Activated naive CD4-positive, alpha-beta T cell treated with anti-CD3 and anti-CD28 coated beads for 36 hours (primary cell): ENCODE measurements at regions of chr1 and their contacts with region 1.

Region 1: GRCh38 chr1:244272471-244273261 is 179.0 kb downstream of the ADSS2 start:
- DNase-seq: peak; percentile 84
- H3K4me3 Mint-ChIP-seq: no peak overlapping the region
- H3K27ac Mint-ChIP-seq: no peak overlapping the region
- H3K4me1 Mint-ChIP-seq: no peaks in the 10 kb centered on the region
- H3K27me3 Mint-ChIP-seq: no peaks in the 10 kb centered on the region

Region 2: GRCh38 chr1:242467556-242468145 is 1805.0 kb before region 1 on chr1:
- CTCF ChIA-PET with region 1: no interaction called
- intact Hi-C with region 1: loop called (anchors 10 kb)
- DNase-seq: peak; percentile 42
- H3K4me3 Mint-ChIP-seq: no peak overlapping the region
- H3K27ac Mint-ChIP-seq: no peak overlapping the region
- H3K4me1 Mint-ChIP-seq: no peaks in the 10 kb centered on the region
- H3K27me3 Mint-ChIP-seq: peaks cover 7% of the 10 kb centered on the region

Region 3: DNA sequence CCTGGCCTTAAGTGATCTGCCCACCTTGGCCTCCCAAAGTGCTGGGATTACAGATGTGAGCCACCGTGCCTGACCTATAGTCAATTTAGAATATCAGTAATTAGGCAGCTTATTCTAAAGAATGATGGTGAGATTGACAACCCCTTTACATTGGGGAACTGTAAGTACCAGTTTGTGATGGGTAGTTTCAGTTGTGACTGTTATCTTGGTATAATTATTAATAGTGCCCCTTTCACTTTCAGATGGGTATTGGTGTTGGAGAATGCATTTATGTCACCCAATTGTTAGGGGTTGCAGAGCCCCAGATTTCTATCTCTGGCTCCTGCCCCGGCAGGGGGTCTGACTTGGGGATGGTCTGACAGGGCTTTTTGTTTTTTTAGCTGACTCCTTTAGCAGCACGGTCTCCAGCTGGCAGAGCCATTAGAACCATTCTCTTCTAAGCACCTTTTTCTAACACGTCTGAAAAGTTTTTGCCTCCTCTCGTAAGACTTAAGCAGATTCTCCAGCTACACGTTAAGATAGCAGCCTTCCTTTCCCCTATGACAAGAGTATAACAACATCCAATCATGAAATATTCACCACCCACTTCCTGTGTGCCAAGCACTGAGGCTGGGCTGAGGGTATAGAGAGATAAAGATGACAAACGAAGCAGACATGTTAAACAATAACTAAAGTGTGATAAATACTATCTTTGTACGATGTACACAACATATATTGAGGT is 859.1 kb before region 1 on chr1:
- CTCF ChIA-PET with region 1: no interaction called
- intact Hi-C with region 1: loop called (anchors 10 kb)
- DNase-seq: peak; percentile 8
- H3K4me3 Mint-ChIP-seq: no peak overlapping the region
- H3K27ac Mint-ChIP-seq: no peak overlapping the region
- H3K4me1 Mint-ChIP-seq: peaks cover 23% of the 10 kb centered on the region
- H3K27me3 Mint-ChIP-seq: no peaks in the 10 kb centered on the region

Region 4: GRCh38 chr1:243748706-243749283 is 523.9 kb before region 1 on chr1:
- CTCF ChIA-PET with region 1: no interaction called
- intact Hi-C with region 1: loop called (anchors 1 kb)
- DNase-seq: no peak
- H3K4me3 Mint-ChIP-seq: no peak overlapping the region
- H3K27ac Mint-ChIP-seq: no peak overlapping the region
- H3K4me1 Mint-ChIP-seq: peaks cover 25% of the 10 kb centered on the region
- H3K27me3 Mint-ChIP-seq: no peaks in the 10 kb centered on the region

Region 5: DNA sequence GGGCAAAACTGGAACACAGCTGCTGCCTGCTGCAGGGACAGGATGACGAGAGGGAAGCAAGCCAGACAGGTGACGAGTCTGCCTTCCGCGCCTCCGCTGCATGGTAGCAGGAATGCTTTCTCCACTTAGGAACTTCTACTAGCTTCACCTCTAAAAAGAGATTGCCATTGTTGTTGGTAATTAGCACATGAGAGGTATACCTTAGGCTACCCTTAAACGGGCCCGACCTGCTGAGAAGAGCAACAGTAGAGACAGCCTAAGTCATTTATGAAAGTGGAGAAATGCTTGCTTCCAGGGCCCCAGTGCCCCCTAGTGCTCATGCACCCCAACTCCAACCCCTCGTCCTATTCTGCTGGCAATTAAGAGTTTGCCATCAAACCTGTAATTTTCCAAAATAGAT is 325.7 kb before region 1 on chr1:
- CTCF ChIA-PET with region 1: no interaction called
- intact Hi-C with region 1: loop called (anchors 2 kb)
- DNase-seq: peak; percentile 59
- H3K4me3 Mint-ChIP-seq: no peak overlapping the region
- H3K27ac Mint-ChIP-seq: no peak overlapping the region
- H3K4me1 Mint-ChIP-seq: no peaks in the 10 kb centered on the region
- H3K27me3 Mint-ChIP-seq: no peaks in the 10 kb centered on the region

Region 6: GRCh38 chr1:244092293-244092963 is 180.2 kb before region 1 on chr1:
- CTCF ChIA-PET with region 1: no interaction called
- intact Hi-C with region 1: no loop called
- DNase-seq: no peak
- H3K4me3 Mint-ChIP-seq: no peak overlapping the region
- H3K27ac Mint-ChIP-seq: no peak overlapping the region
- H3K4me1 Mint-ChIP-seq: peaks cover 3% of the 10 kb centered on the region
- H3K27me3 Mint-ChIP-seq: no peaks in the 10 kb centered on the region

Region 7: GRCh38 chr1:244302889-244303613 is 30.4 kb after region 1 on chr1:
- CTCF ChIA-PET with region 1: interaction called, 10 read pairs
- intact Hi-C with region 1: loop called (anchors 1 kb)
- DNase-seq: no peak
- H3K4me3 Mint-ChIP-seq: no peak overlapping the region
- H3K27ac Mint-ChIP-seq: no peak overlapping the region
- H3K4me1 Mint-ChIP-seq: peaks cover 7% of the 10 kb centered on the region
- H3K27me3 Mint-ChIP-seq: peaks cover 3% of the 10 kb centered on the region